Activated T-helper 1 cell treated with anti-CD3 and anti-CD28 coated beads, Interleukin-12 subunit alpha, Interleukin-12 subunit beta, Interleukin-2, Interleukin-4 antibody, amounts not matched to agents 30 ng/mL and 10 ng/mL and 1 ng/mL, durations not matched to agents 14 hours and 24 hours and 36 hours (primary cell): ENCODE measurements at regions of chr22 and their contacts with region 1.

Region 1: DNA sequence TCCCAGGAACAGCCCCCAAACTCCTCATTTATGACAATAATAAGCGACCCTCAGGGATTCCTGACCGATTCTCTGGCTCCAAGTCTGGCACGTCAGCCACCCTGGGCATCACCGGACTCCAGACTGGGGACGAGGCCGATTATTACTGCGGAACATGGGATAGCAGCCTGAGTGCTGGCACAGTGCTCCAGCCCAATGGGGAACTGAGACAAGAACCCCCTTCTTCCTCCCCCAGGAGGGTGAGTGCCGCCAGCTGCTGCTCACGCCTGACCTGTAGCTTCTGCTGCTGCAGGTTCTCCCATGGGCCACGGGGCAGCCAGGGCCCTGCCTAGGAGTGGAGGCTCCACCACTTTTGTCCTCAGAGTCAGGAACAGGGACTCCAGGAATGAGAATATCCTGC is 78.2 kb downstream of the VPREB1 start:
- DNase-seq: no peak
- H3K4me3 Mint-ChIP-seq: no peak overlapping the region
- H3K27ac Mint-ChIP-seq: no peak overlapping the region
- H3K4me1 Mint-ChIP-seq: no peaks in the 10 kb centered on the region
- H3K27me3 Mint-ChIP-seq: peaks cover 3% of the 10 kb centered on the region

Region 2: DNA sequence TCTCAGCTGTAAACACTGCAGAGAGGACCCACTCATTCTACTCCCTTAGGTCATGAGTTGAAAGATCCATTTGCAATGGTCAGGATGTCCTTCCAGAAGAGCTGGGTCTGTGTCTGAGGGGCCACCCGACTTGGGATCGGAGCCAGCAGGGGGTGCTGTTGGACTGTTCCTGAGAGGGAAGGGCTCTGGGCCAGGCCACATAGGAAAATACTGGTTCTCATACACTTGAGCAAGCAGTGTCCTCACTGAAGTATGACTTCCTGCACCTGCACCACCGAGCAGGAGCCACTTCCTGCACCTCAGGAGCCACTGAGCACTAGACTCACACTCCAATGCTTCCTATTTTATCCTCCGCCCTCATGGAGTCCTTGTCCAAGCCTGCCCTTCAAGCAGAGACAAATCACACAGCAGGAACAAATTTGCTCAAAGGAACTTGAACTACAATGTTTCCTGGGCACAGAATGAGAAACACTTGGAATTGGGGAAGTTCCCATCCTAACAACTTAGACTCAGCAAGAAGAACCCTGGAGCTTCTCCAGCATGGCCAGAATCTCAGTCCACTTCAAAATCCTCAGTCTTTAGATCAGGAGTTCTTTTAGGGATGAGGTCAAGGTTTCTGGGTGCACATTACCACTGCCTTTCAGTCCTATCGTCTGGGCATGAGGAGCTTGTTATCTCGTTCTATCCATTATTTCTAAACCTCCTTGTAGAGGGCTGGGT is 114.8 kb before region 1 on chr22:
- intact Hi-C with region 1: loop called (anchors 1 kb)
- DNase-seq: peak; percentile 75
- H3K4me3 Mint-ChIP-seq: no peak overlapping the region
- H3K27ac Mint-ChIP-seq: peak overlapping the region; percentile 84
- H3K4me1 Mint-ChIP-seq: peaks cover 41% of the 10 kb centered on the region
- H3K27me3 Mint-ChIP-seq: peaks cover 4% of the 10 kb centered on the region

Region 3: DNA sequence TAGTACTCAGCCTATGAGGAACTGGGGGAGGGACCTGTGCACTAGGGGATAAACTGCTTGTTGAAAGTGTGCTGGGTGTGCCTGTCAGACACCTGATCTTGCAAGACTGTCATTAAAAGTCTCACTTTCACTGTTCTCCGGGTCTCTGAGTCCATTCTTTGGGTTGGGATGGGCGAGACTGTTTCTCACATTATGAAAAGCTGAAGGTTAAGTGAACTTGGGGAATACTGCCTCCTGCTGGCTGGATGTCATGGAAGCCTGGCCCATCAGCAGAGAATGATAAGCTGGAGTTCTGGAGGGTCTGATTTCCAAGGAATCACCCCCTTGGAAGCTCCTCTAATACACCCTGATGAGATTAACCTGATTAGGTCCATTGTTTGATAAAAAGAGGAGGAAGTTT is 87.2 kb before region 1 on chr22:
- intact Hi-C with region 1: no loop called
- DNase-seq: peak; percentile 29
- H3K4me3 Mint-ChIP-seq: no peak overlapping the region
- H3K27ac Mint-ChIP-seq: no peak overlapping the region
- H3K4me1 Mint-ChIP-seq: peaks cover 15% of the 10 kb centered on the region
- H3K27me3 Mint-ChIP-seq: peaks cover 2% of the 10 kb centered on the region

Region 4: GRCh38 chr22:22348127-22348814 is 25.5 kb after region 1 on chr22:
- intact Hi-C with region 1: no loop called
- DNase-seq: no peak
- H3K4me3 Mint-ChIP-seq: no peak overlapping the region
- H3K27ac Mint-ChIP-seq: no peak overlapping the region
- H3K4me1 Mint-ChIP-seq: no peaks in the 10 kb centered on the region
- H3K27me3 Mint-ChIP-seq: peaks cover 25% of the 10 kb centered on the region